HAP-1 (cell line): ENCODE measurements at regions of chr13 and their contacts with region 1.

Region 1: DNA sequence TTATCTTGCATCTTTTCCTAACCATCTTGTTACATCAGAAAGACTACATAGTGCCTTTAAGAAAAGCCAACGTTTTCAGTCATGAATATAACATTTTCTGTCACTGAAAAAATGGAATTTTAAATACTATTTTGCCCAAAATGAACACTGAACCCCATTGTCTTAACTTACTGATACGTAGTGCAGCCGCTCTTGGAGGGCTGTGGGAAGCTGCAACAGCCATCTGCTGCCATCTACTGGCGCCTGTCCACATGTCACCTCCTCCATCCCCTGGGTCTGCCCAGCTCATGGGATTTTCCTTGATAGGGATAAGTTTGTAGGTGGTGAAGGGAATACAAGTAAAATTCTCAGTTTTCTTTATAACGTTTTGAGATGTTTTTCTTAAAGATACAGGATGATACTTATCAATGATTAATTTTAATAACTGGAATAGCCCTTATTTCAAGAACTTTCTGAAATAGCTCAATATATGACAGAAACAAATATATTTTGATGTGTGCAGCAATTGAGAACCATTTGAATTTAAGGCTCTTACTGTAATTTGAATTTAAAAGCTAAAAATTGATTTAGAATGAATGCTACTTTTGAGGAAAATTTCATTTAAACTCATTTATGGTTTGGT is 73.7 kb downstream of the GGACT start:
- DNase-seq: peak; percentile 76 to 84
- H3K4me3 ChIP-seq: no peak overlapping the region
- H3K4me1 ChIP-seq: peaks cover 20% of the 10 kb centered on the region
- H3K27me3 ChIP-seq: peaks cover 9% of the 10 kb centered on the region; the same call in 1 of the 2 replicates

Region 2: GRCh38 chr13:99656092-99656745 is 858.7 kb before region 1 on chr13:
- in situ Hi-C with region 1: loop called (anchors 10 kb)
- DNase-seq: peak; percentile 80 to 85
- H3K4me3 ChIP-seq: no peak overlapping the region
- H3K4me1 ChIP-seq: peaks cover 11% of the 10 kb centered on the region
- H3K27me3 ChIP-seq: peaks cover 13% of the 10 kb centered on the region

Region 3: GRCh38 chr13:99908140-99908803 is 606.6 kb before region 1 on chr13:
- in situ Hi-C with region 1: loop called (anchors 10 kb)
- DNase-seq: no peak
- H3K4me3 ChIP-seq: no peak overlapping the region
- H3K4me1 ChIP-seq: no peaks in the 10 kb centered on the region
- H3K27me3 ChIP-seq: peaks cover 32% of the 10 kb centered on the region

Region 4: DNA sequence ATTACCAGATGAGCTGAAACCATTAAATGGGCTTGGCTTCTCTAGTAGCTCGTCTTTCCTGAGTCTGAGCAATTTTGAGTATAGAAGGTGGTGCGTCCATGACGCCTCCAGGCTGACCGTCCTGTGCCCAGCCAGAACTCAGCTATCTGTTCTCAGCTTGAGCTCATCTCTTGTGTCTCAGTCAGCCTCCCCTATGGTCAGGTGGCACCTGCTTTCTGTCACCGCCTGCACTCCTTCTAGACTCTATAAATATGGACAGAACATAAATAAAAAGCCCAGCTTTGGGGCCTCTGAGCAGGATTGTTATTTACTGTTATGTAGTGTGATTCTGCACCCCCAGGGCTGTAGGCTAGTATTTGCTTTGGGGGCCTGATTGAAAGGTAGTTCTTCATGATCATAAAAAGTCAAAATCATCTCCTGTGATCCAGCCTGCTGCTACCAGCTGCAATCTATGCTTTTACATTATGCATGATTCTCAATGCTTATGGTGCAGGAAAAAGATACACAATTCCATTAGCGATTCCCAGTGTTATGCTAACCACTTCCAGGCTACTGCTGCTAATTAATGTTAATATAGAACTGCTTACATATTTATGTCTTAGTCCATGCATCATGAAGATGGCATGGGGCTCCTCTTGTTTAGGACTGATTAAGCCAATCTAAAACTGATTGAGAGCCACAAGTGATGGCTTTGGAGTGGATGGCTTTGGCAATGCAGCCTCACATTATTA is 232.2 kb after region 1 on chr13:
- in situ Hi-C with region 1: no loop called
- DNase-seq: no peak
- H3K4me3 ChIP-seq: no peak overlapping the region
- H3K4me1 ChIP-seq: no peaks in the 10 kb centered on the region
- H3K27me3 ChIP-seq: no peaks in the 10 kb centered on the region

Region 5: DNA sequence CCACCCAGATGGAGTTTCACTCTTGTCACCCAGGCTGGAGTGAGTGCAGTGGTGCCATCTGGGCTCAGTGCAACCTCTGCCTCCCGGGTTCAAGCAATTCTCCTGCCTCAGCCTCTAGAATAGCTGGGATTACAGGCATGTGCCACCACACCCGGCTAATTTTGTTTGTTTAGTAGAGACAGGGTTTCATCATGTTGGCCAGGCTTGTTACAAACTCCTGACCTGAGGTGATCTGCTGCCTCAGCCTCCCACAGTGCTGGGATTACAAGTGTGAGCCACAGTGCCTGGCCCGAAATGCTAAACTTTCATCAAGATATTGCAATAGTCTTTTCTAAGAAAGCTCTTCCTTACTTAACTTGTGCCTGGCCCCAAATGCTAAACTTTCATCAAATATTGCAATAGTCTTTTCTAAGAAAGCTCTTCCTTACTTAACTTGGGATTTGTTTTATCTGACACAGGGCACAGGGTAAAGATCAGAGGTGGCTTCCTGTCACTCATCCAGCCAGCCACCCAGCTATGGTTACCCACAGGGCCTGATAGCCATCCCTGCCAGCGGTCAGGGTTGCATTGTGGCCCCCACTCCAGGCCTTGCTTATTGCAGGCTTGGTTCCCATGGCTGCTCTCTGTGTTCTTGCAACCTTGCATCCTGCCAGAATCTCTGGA is 512.0 kb after region 1 on chr13:
- in situ Hi-C with region 1: no loop called
- DNase-seq: no peak
- H3K4me3 ChIP-seq: no peak overlapping the region
- H3K4me1 ChIP-seq: peaks cover 12% of the 10 kb centered on the region
- H3K27me3 ChIP-seq: no peaks in the 10 kb centered on the region